ENCODE measurements at regions of chr11 and their contacts with region 1.

Region 1: DNA sequence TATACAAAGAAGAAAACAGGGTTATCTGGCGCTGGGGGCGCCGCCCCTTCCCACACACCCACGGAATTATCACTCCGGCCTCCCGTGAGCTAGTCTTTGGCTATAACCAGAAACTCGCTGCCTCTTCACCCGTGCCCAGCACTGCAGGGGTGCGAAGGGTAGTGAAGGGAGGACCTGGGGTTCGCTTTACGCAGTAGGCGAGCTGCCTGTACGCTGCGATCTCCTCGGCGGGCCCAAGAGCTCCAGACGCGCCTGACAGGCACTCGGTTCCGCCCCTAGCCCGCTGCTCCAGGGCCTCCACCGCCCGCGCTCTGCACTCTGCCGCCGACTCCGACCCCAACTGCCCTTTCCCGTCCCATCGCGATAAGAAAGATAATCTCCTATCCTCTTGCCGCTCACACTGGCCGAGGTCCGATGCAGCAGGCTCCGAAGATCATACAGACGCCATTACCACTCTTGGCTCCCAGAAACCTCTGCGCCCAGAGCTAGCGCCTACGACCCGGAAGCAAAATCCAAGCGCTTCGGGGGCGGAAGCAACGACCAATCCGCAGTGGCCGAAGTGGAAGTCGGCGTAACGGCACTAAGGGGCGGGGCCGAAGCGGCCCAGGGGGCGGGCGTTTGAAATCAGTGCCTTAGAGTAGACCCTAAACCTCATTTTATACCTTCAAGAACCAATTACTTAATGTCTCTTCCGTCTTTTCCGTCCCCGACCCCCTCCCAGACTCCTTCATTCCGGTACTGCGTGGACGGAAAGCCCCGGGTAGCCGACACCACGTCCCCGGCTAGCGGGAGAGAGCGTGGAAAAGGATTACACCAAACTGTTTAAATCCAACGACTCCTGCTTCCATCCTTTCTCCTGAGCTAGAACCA is at the starts of genes CWC15 and KDM4D:
- DNase-seq: peak; percentile 97
- H3K4me3 ChIP-seq: peak within 1 kb of the TSS; percentile 85 to 95
- H3K27ac ChIP-seq: peak within 1 kb of the TSS; percentile 85 to 90
- H3K4me1 ChIP-seq: peaks cover 7% of the 10 kb centered on the region
- H3K27me3 ChIP-seq: no peaks in the 10 kb centered on the region
- CTCF ChIP-seq: no peak
- POLR2A ChIP-seq: no peak
- total RNA-seq, gene CWC15: 59.2 to 81.8 TPM
- total RNA-seq, gene KDM4D: 43.9 to 44.2 TPM

Region 2: GRCh38 chr11:94623120-94623735 is 350.1 kb before region 1 on chr11:
- intact Hi-C with region 1: loop called (anchors 5 kb)
- DNase-seq: peak; percentile 63
- H3K4me3 ChIP-seq: no peak overlapping the region
- H3K27ac ChIP-seq: no peak overlapping the region
- H3K4me1 ChIP-seq: no peaks in the 10 kb centered on the region
- H3K27me3 ChIP-seq: no peaks in the 10 kb centered on the region
- CTCF ChIP-seq: peak; percentile 41 to 68 (median 66)
- POLR2A ChIP-seq: no peak